ENCODE measurements at regions of chr6 and their contacts with region 1.

Region 1: GRCh38 chr6:158793432-158793831 is 25.7 kb downstream of the EZR start:
- DNase-seq: no peak
- H3K4me3 Mint-ChIP-seq: no peak overlapping the region
- H3K27ac Mint-ChIP-seq: no peak overlapping the region
- H3K4me1 Mint-ChIP-seq: peaks cover 81% of the 10 kb centered on the region
- H3K27me3 Mint-ChIP-seq: no peaks in the 10 kb centered on the region

Region 2: GRCh38 chr6:158752613-158753012 is 40.8 kb before region 1 on chr6:
- CTCF ChIA-PET with region 1: no interaction called
- POLR2A ChIA-PET with region 1: no interaction called
- DNase-seq: no peak
- H3K4me3 Mint-ChIP-seq: no peak overlapping the region
- H3K27ac Mint-ChIP-seq: no peak overlapping the region
- H3K4me1 Mint-ChIP-seq: no peaks in the 10 kb centered on the region
- H3K27me3 Mint-ChIP-seq: no peaks in the 10 kb centered on the region

Region 3: GRCh38 chr6:158808941-158809678 is 15.7 kb after region 1 on chr6:
- CTCF ChIA-PET with region 1: interaction called, 8 read pairs
- POLR2A ChIA-PET with region 1: interaction called, 18 read pairs
- DNase-seq: peak; percentile 36
- H3K4me3 Mint-ChIP-seq: no peak overlapping the region
- H3K27ac Mint-ChIP-seq: peak overlapping the region; percentile 67
- H3K4me1 Mint-ChIP-seq: peaks cover 94% of the 10 kb centered on the region
- H3K27me3 Mint-ChIP-seq: no peaks in the 10 kb centered on the region

Region 4: GRCh38 chr6:158819213-158819909 is 25.9 kb after region 1 on chr6 and contains the start of gene EZR:
- CTCF ChIA-PET with region 1: interaction called, 8 read pairs
- POLR2A ChIA-PET with region 1: interaction called, 11 read pairs
- DNase-seq: peak; percentile 82
- H3K4me3 Mint-ChIP-seq: peak within 1 kb of the TSS; percentile 99
- H3K27ac Mint-ChIP-seq: peak within 1 kb of the TSS; percentile 77
- H3K4me1 Mint-ChIP-seq: peaks cover 28% of the 10 kb centered on the region
- H3K27me3 Mint-ChIP-seq: no peaks in the 10 kb centered on the region
- total RNA-seq, gene EZR: 225 to 228 TPM

Region 5: GRCh38 chr6:158853072-158853871 is 59.8 kb after region 1 on chr6:
- CTCF ChIA-PET with region 1: interaction called, 5 read pairs
- POLR2A ChIA-PET with region 1: interaction called, 11 read pairs
- DNase-seq: peak; percentile 90
- H3K4me3 Mint-ChIP-seq: no peak overlapping the region
- H3K27ac Mint-ChIP-seq: no peak overlapping the region
- H3K4me1 Mint-ChIP-seq: peaks cover 36% of the 10 kb centered on the region
- H3K27me3 Mint-ChIP-seq: peaks cover 6% of the 10 kb centered on the region

Region 6: DNA sequence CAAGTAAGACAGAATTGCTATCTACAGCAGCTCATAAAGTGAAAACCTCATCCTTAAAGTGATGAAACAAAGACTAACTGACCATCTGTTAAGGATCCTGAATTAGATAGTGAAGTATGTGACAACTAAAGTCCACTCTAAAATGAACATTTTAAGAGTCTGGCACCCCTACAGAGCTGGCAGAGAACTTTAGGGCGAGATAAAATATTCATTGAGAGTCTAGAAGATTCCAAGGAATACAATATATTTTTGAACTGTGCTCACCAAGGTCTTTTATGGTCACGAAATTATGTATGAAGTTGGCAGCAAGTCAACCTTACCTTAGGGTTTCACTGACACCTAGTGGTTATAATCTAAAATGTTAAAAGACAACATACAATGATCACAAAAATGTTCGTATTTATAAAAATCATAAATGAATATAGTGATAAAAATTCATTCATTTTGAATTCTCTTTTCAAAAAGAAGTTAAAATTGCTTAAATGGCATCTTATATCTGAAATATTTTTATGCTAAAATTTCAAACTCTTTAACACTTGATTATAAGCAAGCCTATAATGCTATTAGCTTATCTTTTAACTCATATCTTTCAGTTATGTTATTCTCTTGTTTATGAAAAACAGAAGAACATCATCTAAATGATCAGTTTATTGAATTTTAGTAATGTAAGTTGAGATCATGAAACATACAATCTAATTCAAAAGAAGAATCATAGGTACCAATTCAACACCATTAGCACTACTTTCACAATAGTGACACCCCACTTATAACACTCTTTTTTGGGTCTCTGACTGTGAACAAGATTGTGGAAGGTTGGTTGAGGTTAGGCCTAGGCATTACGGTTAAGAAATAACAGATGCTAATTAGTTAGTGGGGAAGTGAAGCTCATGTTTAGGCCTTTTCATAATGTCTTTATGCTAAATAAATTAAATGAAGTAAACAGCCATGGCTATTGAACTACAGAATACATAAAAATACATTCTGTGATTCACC is 179.1 kb after region 1 on chr6:
- CTCF ChIA-PET with region 1: interaction called, 24 read pairs
- POLR2A ChIA-PET with region 1: interaction called, 3 read pairs
- DNase-seq: no peak
- H3K4me3 Mint-ChIP-seq: no peak overlapping the region
- H3K27ac Mint-ChIP-seq: no peak overlapping the region
- H3K4me1 Mint-ChIP-seq: peaks cover 2% of the 10 kb centered on the region
- H3K27me3 Mint-ChIP-seq: peaks cover 1% of the 10 kb centered on the region

Measured in activated CD4-positive, alpha-beta memory T cell treated with anti-CD3 and anti-CD28 coated beads, Interleukin-2, amount 10 ng/mL, durations not matched to agents 7 days and 5 days (primary cell).